A549 (cell line): ENCODE measurements at regions of chr17 and their contacts with region 1.

Region 1: GRCh38 chr17:50318501-50319285 is 27.2 kb upstream of the XYLT2 start:
- DNase-seq: no peak
- ATAC-seq: 0 out of 6 replicates have a peak, but pooled peaks of 1 of the 2 experiments have one; percentile 19
- H3K4me3 ChIP-seq: no peak overlapping the region
- H3K27ac ChIP-seq: no peak overlapping the region
- H3K4me1 ChIP-seq: no peaks in the 10 kb centered on the region
- CTCF ChIP-seq: no peak
- EP300 ChIP-seq: no peak
- POLR2A ChIP-seq: no peak
- RAD21 ChIP-seq: no peak

Region 2: DNA sequence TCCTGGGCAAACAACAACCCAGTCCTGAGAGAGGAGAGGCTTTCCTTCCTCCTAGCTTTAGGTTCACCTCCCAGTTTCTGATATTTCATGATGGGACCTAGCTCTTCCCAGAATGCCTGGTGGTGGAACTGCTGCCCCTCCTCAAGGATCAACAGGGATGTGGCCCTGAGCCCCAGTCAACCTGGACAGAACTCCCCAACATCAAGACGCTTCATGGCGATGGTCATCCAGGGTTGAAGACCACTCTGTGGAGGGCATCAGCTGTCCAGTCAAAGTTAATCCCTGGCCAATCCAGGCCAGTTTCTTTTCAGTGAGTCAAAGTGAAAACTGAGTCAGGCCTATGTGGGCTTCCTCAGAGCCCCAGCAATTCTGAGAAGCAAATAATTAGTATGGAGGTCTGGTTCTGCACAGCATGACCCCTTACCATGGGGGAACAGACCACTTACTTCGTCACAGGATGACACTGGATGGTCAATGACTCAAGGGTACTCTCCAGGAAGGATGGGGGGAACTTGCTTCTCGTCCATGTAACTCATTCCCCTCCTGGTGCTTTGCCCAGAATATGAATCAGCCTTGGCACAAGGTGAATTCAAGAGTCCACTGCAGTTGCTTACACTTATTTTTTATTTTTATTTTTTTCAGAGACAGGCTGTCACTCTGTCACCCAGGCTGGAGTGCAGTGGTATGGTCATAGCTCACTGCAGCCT is 12.5 kb after region 1 on chr17:
- CTCF ChIA-PET with region 1: interaction called, 15 read pairs
- POLR2A ChIA-PET with region 1: no interaction called
- DNase-seq: no peak
- ATAC-seq: peak in 1 of 2 experiments; percentile 37; a peak in 1 of 6 replicates
- H3K4me3 ChIP-seq: no peak overlapping the region
- H3K27ac ChIP-seq: no peak overlapping the region
- H3K4me1 ChIP-seq: no peaks in the 10 kb centered on the region
- CTCF ChIP-seq: no peak
- EP300 ChIP-seq: no peak
- POLR2A ChIP-seq: no peak
- RAD21 ChIP-seq: no peak

Region 3: GRCh38 chr17:50414808-50415207 is 96.1 kb after region 1 on chr17:
- CTCF ChIA-PET with region 1: no interaction called
- POLR2A ChIA-PET with region 1: no interaction called
- DNase-seq: no peak
- ATAC-seq: no peak
- H3K4me3 ChIP-seq: no peak overlapping the region
- H3K27ac ChIP-seq: no peak overlapping the region
- H3K4me1 ChIP-seq: no peaks in the 10 kb centered on the region
- CTCF ChIP-seq: no peak
- EP300 ChIP-seq: no peak
- POLR2A ChIP-seq: no peak
- RAD21 ChIP-seq: no peak

Region 4: GRCh38 chr17:50425682-50426471 is 107.2 kb after region 1 on chr17 and contains the start of gene ACSF2:
- CTCF ChIA-PET with region 1: no interaction called
- POLR2A ChIA-PET with region 1: no interaction called
- DNase-seq: peak; percentile 50 to 87
- ATAC-seq: peak; percentile 84 to 90
- H3K4me3 ChIP-seq: peak within 1 kb of the TSS; percentile 72
- H3K27ac ChIP-seq: peak within 1 kb of the TSS; percentile 77 to 90
- H3K4me1 ChIP-seq: peaks cover 27% of the 10 kb centered on the region
- CTCF ChIP-seq: no peak
- EP300 ChIP-seq: no peak
- POLR2A ChIP-seq: no peak
- RAD21 ChIP-seq: no peak
- polyA plus RNA-seq, gene ACSF2: 28.9 and 33.6 TPM in 2 replicates